Activated CD4-positive, alpha-beta T cell treated with anti-CD3 and anti-CD28 coated beads, Interleukin-2, amount 10 ng/mL, durations not matched to agents 24 days and 14 days (primary cell): ENCODE measurements at regions of chr7 and their contacts with region 1.

Region 1: GRCh38 chr7:95723592-95724180 is 48.7 kb upstream of the DYNC1I1 start:
- DNase-seq: no peak
- H3K4me3 Mint-ChIP-seq: no peak overlapping the region
- H3K27ac Mint-ChIP-seq: no peak overlapping the region
- H3K4me1 Mint-ChIP-seq: no peaks in the 10 kb centered on the region
- H3K27me3 Mint-ChIP-seq: no peaks in the 10 kb centered on the region

Region 2: DNA sequence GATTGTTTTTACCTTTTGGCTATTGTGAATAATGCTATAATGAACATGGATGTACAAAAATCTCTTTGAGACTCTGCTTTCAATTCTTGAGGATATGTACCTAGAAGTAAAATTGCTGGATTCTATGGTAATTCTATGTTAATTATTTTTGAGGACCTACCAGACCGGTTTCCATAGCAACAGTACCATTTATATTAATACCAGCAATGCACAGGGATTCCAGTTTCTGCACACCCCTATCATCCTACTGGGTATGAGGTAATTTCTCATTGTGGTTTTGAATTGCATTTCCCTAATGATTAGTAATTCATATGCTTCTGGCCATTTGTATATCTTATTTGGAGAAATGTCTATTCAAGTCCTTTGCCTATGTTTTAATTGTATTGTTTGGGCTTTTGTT is 826.1 kb before region 1 on chr7:
- intact Hi-C with region 1: no loop called
- DNase-seq: no peak
- H3K4me3 Mint-ChIP-seq: no peak overlapping the region
- H3K27ac Mint-ChIP-seq: no peak overlapping the region
- H3K4me1 Mint-ChIP-seq: no peaks in the 10 kb centered on the region
- H3K27me3 Mint-ChIP-seq: no peaks in the 10 kb centered on the region

Region 3: GRCh38 chr7:95066736-95067530 is 656.8 kb before region 1 on chr7:
- intact Hi-C with region 1: no loop called
- DNase-seq: no peak
- H3K4me3 Mint-ChIP-seq: no peak overlapping the region
- H3K27ac Mint-ChIP-seq: no peak overlapping the region
- H3K4me1 Mint-ChIP-seq: no peaks in the 10 kb centered on the region
- H3K27me3 Mint-ChIP-seq: no peaks in the 10 kb centered on the region

Region 4: GRCh38 chr7:95263785-95264575 is 459.7 kb before region 1 on chr7:
- intact Hi-C with region 1: no loop called
- DNase-seq: no peak
- H3K4me3 Mint-ChIP-seq: no peak overlapping the region
- H3K27ac Mint-ChIP-seq: no peak overlapping the region
- H3K4me1 Mint-ChIP-seq: no peaks in the 10 kb centered on the region
- H3K27me3 Mint-ChIP-seq: peaks cover 3% of the 10 kb centered on the region

Region 5: GRCh38 chr7:95871078-95871782 is 147.5 kb after region 1 on chr7:
- intact Hi-C with region 1: loop called (anchors 2 kb)
- DNase-seq: peak; percentile 63
- H3K4me3 Mint-ChIP-seq: no peak overlapping the region
- H3K27ac Mint-ChIP-seq: no peak overlapping the region
- H3K4me1 Mint-ChIP-seq: no peaks in the 10 kb centered on the region
- H3K27me3 Mint-ChIP-seq: peaks cover 2% of the 10 kb centered on the region